Activated T-helper 1 cell treated with anti-CD3 and anti-CD28 coated beads, Interleukin-12 subunit alpha, Interleukin-12 subunit beta, Interleukin-2, Interleukin-4 antibody, amounts not matched to agents 30 ng/mL and 10 ng/mL and 1 ng/mL, durations not matched to agents 14 hours and 24 hours and 36 hours (primary cell): ENCODE measurements at regions of chr3 and their contacts with region 1.

Region 1: DNA sequence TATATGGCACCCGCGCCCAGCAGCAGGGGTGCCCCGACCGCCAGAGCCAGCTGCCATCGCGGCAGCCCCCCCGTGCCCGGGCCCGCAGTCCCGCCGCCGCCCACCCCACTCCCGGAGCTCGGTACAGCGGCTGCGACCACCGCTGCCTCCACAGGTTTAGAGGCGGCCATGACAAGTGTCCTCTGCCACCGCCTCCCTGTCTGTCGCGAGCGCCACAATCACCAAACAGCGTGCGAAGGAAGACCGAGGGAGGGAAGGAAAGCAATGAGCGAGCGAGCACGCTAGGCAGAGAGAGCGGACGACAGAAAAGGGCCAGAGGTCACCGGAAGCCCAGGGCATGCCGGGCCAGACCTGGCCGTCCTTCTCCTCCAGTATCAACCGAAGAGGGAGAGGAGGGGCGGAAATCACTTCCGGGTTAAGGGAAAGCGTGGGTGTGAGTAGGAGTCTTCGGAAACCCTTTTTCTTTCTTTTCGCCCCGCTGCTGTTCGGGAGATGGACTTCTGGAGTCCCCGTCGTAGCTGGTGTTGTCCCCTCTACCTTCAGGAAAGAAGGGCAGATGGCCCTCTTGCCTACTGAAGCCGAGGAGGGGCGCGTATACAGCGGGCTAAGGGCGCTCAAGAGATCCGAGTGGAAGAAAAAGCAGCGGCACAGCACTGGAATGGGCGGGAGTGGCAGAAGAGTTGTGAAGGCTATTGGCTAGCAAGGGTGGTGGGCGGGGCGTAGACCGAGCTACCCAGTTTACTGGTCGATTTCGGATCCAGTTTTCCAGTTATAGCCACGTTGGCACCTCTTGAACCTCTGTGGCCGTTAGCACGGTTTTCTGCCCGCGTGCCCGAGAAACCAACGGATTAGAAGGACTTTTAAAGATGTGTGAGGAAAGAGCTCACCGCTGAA is at the starts of genes LNP1 and TOMM70:
- DNase-seq: peak; percentile 91
- H3K4me3 Mint-ChIP-seq: peak within 1 kb of the TSS; percentile 96
- H3K27ac Mint-ChIP-seq: peak within 1 kb of the TSS; percentile 99
- H3K4me1 Mint-ChIP-seq: peaks cover 60% of the 10 kb centered on the region
- H3K27me3 Mint-ChIP-seq: peaks cover 2% of the 10 kb centered on the region
- total RNA-seq, gene LNP1: 2.4 and 2.6 TPM in 2 replicates
- total RNA-seq, gene TOMM70: 60.0 and 62.9 TPM in 2 replicates

Region 2: DNA sequence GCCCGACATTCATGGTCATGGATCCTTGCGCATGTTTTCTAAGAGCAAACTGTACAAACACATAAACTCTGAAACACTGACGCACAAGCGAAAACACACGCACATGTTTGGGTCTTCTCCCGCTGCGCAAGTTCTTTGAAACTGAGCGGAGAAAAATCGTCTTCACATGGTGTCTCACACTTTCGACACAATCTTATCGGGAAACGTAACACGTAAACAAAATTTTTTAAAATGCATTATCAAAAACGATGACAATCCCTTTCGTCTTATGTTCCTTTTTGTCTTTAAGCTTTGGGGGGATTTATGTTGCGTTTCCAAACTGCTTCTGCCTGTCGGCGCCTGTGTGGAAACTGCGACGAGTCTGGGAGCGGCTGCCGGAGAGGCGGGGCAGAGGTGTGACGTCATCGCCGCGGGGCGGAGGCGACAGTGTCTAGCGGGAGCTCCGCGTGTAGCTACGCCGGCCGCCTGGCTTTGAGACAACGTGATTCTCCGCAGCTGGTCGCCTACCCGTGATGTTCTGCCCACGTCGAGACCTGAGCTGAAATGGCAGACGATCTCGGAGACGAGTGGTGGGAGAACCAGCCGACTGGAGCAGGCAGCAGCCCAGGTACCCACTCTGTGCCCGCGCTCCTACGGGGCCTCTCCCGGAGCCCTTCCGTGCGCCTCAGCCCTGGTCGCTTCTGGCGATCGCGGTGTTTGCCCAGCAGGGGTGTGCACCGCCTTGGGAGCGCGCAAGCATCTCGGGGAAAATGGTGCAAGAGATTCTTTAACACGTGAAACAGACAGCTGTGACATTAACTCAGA is 583.4 kb before region 1 on chr3 and contains the start of gene CMSS1:
- intact Hi-C with region 1: loop called (anchors 2 kb)
- DNase-seq: peak; percentile 92
- H3K4me3 Mint-ChIP-seq: peak within 1 kb of the TSS; percentile 88
- H3K27ac Mint-ChIP-seq: peak within 1 kb of the TSS; percentile 90
- H3K4me1 Mint-ChIP-seq: peaks cover 35% of the 10 kb centered on the region
- H3K27me3 Mint-ChIP-seq: no peaks in the 10 kb centered on the region
- total RNA-seq, gene CMSS1: 108 and 121 TPM in 2 replicates

Region 3: DNA sequence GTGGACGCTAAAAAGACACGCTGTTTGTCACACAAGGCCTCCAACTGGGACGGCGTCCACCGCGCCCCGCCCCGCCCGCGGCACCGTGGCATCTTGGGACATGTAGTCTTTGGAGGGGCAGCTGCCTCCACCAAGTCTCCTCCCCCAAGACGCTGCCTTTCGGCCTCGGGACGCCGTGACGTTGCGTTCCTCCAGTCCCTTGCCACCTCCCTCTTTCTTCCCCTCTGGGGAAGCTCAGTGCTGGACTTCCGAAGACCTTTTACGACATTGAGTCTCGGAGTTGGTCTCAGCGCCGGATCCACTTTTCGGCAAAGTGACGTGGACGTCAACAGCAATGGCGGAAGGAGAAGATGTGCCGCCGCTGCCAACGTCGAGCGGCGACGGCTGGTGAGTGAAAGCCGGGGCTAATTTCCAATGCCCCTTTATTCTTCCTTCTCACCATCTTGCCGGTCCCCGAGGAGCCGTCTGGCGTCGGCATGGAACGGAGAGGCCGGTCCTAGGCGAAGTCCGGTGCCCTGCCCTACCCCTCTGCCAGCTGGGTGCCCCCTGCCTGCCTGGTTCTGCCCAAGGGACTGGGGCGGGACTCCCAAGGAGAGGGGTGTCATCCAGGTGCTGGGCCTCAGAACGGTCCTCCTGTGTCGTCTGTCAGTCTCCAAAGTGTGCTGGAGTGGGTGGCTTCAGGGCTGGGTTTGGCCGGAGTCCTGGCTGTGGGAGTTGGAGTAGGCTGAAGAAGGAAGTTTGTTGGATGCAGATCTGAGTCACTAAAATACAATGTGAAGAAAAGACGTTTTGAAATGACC is 140.1 kb before region 1 on chr3 and contains the start of gene TBC1D23:
- intact Hi-C with region 1: loop called (anchors 1 kb)
- DNase-seq: peak; percentile 97
- H3K4me3 Mint-ChIP-seq: peak within 1 kb of the TSS; percentile 92
- H3K27ac Mint-ChIP-seq: peak within 1 kb of the TSS; percentile 97
- H3K4me1 Mint-ChIP-seq: peaks cover 38% of the 10 kb centered on the region
- H3K27me3 Mint-ChIP-seq: no peaks in the 10 kb centered on the region
- total RNA-seq, gene TBC1D23: 18.3 and 19.0 TPM in 2 replicates

Region 4: DNA sequence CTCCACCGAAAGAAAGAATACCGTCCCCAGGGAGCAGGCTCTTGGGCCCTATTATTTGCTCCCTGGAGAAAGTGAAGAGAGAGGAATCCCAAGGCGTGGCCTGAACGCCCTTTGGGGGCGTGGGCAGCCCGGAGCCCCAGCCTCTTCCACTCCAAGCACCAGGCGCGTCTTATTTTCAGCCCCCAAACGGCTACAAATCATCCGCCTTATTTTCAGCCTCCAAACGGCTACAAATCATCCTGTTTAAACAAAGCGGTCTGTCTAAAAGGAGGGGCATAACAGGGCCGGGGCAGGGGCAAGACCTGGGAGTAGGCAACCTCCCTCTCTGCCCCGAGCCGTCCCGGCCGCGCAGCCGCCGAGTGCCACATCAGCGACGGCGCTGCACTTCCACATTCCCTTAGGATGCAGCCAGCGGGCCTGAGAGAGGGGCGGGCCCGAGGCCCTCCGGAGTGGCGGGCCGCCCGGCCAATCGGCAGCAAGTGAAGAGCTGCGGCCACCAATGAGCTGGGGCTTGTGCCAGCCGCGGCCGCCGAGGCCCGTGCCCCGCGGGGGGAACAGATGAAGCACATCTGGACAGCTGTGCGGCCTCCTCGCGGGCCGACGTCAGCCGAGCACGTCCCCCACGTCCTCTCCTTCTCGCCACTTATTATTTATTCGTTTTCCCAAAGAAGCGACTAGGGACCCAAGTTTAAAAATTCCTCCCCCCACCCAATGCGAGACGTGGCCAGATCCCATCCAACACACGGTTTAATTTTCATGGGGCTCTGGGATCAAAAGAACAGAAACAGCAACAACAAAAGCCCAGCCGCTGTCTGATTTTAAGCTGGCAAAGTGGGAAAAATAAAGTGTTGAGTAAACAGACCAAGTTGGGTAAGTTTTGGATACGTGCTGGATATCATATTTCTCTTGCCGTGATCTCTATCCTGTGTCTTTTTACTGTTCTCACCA is 91.3 kb after region 1 on chr3 and contains the start of gene TMEM45A:
- intact Hi-C with region 1: loop called (anchors 1 kb)
- DNase-seq: peak; percentile 73
- H3K4me3 Mint-ChIP-seq: peak within 1 kb of the TSS; percentile 86
- H3K27ac Mint-ChIP-seq: no peak within 1 kb of the TSS
- H3K4me1 Mint-ChIP-seq: peaks cover 17% of the 10 kb centered on the region
- H3K27me3 Mint-ChIP-seq: peaks cover 18% of the 10 kb centered on the region
- total RNA-seq, gene TMEM45A: 0.13 and 0.34 TPM in 2 replicates

Region 5: DNA sequence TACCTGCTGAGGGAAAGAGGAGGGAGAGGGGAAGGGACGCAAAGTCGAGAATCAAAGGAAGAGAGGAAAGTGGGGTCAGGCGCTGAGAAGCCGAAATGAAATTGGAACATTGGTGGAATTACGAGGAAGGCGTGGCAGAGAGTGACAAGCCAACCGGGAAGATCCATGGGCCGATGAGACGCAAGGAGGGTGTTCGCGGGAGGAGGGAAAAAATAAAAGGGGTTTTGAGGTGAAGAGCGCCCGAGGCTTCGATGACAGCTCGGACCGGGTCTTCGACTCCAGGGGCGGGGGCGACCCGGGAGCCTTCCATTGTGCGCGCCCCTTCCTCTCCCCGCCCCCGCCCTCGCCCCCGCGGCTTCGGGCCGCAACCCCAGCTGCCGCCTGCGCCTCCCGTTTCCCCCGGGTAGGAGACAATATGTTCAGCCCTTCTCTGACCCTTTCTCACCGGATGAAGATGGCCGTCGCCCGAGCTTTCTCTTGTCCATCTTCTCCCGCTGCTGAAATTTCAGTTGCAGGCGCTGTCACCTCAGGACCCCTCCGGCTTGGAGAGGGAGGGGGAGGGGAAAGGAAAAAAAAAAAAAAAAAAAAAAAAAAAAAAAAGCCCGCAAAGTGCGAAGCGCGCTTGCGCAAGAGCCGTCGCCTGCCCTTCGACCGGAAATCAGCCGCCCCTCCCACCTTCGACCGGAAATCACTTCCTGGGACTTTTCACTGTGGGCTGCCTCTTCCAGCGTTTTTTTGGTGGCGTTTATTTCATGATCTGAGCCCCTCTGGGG is 1111.8 kb after region 1 on chr3 and contains the start of gene SENP7:
- intact Hi-C with region 1: loop called (anchors 2 kb)
- DNase-seq: peak; percentile 72
- H3K4me3 Mint-ChIP-seq: peak within 1 kb of the TSS; percentile 94
- H3K27ac Mint-ChIP-seq: peak within 1 kb of the TSS; percentile 95
- H3K4me1 Mint-ChIP-seq: peaks cover 31% of the 10 kb centered on the region
- H3K27me3 Mint-ChIP-seq: no peaks in the 10 kb centered on the region
- total RNA-seq, gene SENP7: 9.1 and 10.7 TPM in 2 replicates

Region 6: DNA sequence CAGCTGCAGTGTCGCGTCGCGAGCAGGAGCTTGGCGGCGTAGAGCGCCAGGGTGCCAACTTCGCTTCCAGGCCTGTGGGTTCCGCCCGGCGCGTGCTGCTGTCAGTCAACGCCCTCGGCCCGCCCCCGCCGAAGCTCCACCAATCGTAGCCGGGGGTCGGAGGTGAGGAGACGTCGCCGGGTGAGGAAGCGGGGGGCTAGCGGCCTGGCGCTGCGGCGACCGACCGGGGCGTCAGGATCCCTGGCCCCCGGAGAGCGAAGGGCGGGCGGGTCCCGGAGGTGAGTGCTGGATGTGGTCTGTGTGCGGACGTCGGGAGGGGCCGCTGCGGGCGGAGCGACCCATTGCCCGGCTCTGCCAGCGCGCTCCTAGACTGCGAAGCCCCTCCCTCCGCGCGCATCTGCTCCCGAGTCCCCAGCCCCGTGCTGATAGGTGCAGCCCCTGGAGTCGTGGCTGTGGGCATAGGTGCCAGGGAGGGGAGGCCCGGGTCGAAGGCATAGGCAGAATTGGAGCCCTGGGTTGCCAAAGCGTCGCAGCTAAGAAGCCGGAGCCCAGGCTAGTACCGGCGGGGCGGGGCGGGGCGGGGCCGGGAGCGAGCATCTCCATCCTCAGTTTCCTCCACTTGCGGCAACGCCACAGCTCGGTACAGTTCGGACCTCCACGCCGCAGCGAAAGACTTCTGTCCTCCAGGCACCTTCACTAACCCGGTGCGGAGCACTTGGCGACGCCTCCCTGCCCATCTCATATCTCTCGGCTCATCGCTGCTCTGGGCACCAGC is 1378.2 kb after region 1 on chr3 and contains the start of gene NXPE3:
- intact Hi-C with region 1: loop called (anchors 2 kb)
- DNase-seq: peak; percentile 92
- H3K4me3 Mint-ChIP-seq: peak within 1 kb of the TSS; percentile 96
- H3K27ac Mint-ChIP-seq: peak within 1 kb of the TSS; percentile 85
- H3K4me1 Mint-ChIP-seq: peaks cover 38% of the 10 kb centered on the region
- H3K27me3 Mint-ChIP-seq: no peaks in the 10 kb centered on the region
- total RNA-seq, gene NXPE3: 17.6 and 17.8 TPM in 2 replicates